OCI-LY7 (cell line): ENCODE measurements at regions of chr12 and their contacts with region 1.

Region 1: GRCh38 chr12:110100315-110100970 is 23.7 kb upstream of the IFT81 start:
- DNase-seq: peak; percentile 87
- H3K4me3 ChIP-seq: peak overlapping the region; percentile 48
- H3K27ac ChIP-seq: peak overlapping the region; percentile 78
- H3K4me1 ChIP-seq: peaks cover 22% of the 10 kb centered on the region
- CTCF ChIP-seq: peak; percentile 97

Region 2: DNA sequence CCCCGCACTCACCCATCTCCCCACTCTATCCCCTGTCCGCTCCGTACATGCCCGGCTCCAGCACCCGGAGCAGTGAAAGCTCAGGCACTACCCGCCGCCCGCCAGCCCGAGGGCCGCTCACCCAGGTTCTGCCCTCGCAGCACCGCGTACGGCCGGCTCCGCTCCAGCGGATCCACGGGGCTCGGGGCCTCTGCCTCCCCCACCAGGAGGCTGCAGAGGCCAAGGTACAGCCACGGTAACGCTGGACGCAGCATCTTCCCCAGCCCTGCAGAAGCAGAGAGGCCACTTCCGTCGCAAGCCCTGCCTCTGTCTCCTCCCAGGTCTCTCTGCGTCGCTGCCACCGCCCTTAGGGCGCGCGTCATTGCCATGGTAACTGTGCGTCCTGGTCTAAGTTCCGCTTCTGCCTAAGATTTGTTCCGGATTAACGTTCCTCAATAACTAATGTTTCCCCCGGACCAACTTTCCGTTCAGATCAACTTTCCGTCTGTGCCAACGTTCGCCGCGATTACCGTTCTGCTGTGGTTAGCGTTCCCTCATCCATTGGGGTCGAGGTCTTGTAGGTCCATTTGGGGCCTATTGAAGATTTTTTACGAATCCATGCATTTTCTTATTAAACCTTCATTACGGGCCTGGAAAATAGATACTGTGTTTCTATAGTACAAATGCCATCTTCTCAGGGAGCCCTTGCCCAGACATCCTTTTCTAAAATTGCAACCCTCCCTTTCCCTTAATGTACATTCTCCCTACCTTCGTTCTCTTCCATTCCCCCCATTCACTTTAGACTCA is 52.0 kb before region 1 on chr12 and contains the start of gene C12orf76:
- CTCF ChIA-PET with region 1: no interaction called
- POLR2A ChIA-PET with region 1: interaction called, 4 read pairs
- intact Hi-C with region 1: loop called (anchors 1 kb)
- DNase-seq: peak; percentile 97
- H3K4me3 ChIP-seq: peak within 1 kb of the TSS; percentile 90
- H3K27ac ChIP-seq: peak within 1 kb of the TSS; percentile 98
- H3K4me1 ChIP-seq: peaks cover 53% of the 10 kb centered on the region
- CTCF ChIP-seq: no peak
- total RNA-seq, gene C12orf76: 17.0 and 24.4 TPM in 2 replicates

Region 3: DNA sequence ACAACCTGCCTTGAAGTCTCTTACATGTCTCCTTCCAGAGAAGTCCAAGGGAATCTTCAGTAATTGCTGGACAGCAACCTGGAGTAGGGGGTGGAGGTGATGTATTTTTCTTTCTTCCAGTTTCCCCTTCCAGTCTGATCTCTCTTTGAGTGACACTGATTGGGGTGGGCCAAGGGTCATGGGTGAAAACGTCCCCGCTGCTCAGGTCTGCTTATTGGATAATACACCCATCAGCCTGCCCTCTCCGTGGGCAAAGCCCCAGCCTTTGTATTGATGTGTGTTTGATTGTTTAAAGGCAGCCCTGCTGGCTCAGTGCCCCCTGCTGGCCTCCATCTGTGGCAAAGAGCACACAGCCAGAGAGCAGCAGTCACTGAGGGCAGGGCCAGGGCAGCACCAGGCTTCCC is 144.9 kb after region 1 on chr12:
- CTCF ChIA-PET with region 1: no interaction called
- POLR2A ChIA-PET with region 1: no interaction called
- intact Hi-C with region 1: loop called (anchors 1 kb)
- DNase-seq: peak; percentile 68
- H3K4me3 ChIP-seq: no peak overlapping the region
- H3K27ac ChIP-seq: no peak overlapping the region
- H3K4me1 ChIP-seq: peaks cover 5% of the 10 kb centered on the region
- CTCF ChIP-seq: peak; percentile 86

Region 4: DNA sequence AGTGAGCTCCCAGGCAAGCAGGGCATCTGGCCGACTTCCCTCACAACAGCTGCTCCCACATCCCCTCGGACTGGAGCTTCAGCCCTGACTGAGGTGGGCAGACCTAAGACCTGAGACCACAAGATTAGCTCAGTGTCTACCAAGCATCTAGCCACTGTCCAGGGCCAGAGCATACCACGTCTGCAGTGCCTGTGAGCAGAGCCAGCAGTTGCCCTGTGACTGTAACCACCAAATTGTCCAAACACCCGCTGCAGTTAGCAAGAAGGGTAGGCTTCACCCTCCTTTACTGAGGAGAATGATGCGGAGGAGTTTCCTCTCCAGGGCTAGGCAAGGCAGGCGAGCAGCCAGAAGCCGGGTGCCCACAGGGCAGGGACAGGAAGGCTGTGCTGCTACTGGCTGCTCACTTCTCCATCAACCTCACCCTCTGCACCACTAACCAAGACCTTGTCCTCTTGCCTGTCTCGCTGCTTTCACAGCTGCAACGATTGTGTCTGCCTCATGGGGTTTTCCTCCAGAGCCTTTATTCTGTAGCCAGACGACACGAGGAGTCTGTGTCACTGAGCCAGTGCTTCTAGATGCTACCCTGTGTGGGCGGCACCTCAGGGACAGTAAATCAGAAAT is 249.2 kb after region 1 on chr12:
- CTCF ChIA-PET with region 1: no interaction called
- POLR2A ChIA-PET with region 1: no interaction called
- intact Hi-C with region 1: loop called (anchors 5 kb)
- DNase-seq: no peak
- H3K4me3 ChIP-seq: no peak overlapping the region
- H3K27ac ChIP-seq: no peak overlapping the region
- H3K4me1 ChIP-seq: no peaks in the 10 kb centered on the region
- CTCF ChIP-seq: no peak

Region 5: GRCh38 chr12:110431957-110432587 is 331.6 kb after region 1 on chr12:
- CTCF ChIA-PET with region 1: interaction called, 3 read pairs
- POLR2A ChIA-PET with region 1: interaction called, 9 read pairs
- intact Hi-C with region 1: loop called (anchors 1 kb)
- DNase-seq: no peak
- H3K4me3 ChIP-seq: no peak overlapping the region
- H3K27ac ChIP-seq: no peak overlapping the region
- H3K4me1 ChIP-seq: no peaks in the 10 kb centered on the region
- CTCF ChIP-seq: no peak